ENCODE measurements at regions of chr2 and their contacts with region 1.

Region 1: GRCh38 chr2:181742922-181743722 is 62.8 kb upstream of the NEUROD1 start:
- DNase-seq: no peak
- ATAC-seq: no peak
- H3K4me3 ChIP-seq: no peak overlapping the region
- H3K27ac ChIP-seq: no peak overlapping the region
- H3K4me1 ChIP-seq: peaks cover 0 to 2% of the 10 kb centered on the region in 2 donors
- H3K27me3 ChIP-seq: no peaks in the 10 kb centered on the region
- CTCF ChIP-seq: peak; percentile 24 to 62 (median 52)
- POLR2A ChIP-seq: no peak

Region 2: DNA sequence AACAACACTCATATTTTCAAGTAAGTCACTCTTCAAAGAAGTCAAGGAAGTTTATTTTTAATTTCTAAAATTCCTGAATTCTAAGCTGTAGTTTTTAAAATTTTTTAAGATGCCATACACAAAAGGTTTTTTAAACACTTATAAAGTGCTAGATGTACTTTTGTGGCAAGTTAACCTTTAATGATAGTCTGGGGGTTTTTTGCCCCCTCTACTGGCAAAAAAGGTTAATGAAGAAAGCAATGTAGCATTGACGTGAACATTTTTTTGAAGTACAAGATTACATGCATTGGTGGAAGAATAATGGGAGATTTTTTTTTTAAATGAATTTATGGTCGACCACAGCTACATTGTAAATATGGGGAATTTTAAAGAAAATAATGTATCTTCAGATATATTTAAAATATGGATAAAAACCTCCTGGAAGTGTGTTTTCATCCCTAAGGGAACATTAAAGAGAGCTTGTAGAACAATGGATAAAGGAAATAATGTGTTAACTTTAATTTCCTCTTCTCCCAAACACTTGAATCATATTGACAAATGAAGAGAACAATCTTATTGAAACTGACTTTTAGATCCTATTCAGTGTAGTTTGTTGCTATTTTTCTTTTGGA is 161.0 kb after region 1 on chr2:
- in situ Hi-C with region 1: loop called in 2 of 4 experiments (anchors 10 to 25 kb)
- intact Hi-C with region 1: loop called (anchors 2 kb)
- DNase-seq: no peak
- ATAC-seq: no peak
- H3K4me3 ChIP-seq: no peak overlapping the region
- H3K27ac ChIP-seq: no peak overlapping the region
- H3K4me1 ChIP-seq: peaks cover 0 to 2% of the 10 kb centered on the region in 2 donors
- H3K27me3 ChIP-seq: no peaks in the 10 kb centered on the region
- CTCF ChIP-seq: peak in 3 of 5 experiments; percentile 46 to 55 (median 51)
- POLR2A ChIP-seq: no peak

Region 3: DNA sequence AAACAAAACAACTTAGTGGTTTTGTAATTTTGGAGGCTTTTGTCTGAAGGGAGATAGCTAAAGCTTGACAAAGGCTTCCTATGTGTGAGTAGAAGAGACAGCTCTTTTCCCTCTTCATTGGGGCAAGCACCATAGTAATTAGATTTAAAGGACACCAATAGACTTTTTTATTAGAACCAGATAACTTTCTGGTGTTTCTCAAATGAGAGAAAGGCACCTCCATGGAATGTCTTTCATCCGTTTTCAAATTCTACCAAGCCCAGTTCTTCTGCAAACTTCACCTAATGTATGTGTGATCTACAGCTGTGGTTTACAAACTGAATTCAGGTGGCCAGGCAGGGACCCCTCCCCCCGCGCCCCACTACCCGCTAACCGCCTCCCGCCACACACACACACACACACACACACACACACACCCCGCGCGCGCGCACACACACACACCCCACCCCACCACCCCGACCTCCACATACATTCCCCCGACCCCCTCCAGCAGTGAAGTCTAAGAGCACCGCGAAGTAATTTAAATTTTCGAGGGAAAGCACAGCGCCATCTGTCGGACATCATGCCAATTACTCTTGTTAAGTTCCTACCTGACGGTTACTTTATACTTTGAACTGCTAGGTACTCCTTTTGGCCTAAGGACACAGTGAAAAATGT is 210.9 kb after region 1 on chr2:
- in situ Hi-C with region 1: loop called in 2 of 4 experiments (anchors 10 to 25 kb)
- intact Hi-C with region 1: loop called (anchors 1 kb)
- DNase-seq: peak in 1 of 2 donors; percentile 28
- ATAC-seq: peak in 1 of 2 donors; percentile 81
- H3K4me3 ChIP-seq: peak overlapping the region; percentile 37 to 51 (median 47)
- H3K27ac ChIP-seq: no peak overlapping the region
- H3K4me1 ChIP-seq: peaks cover 0 to 5% of the 10 kb centered on the region in 2 donors
- H3K27me3 ChIP-seq: no peaks in the 10 kb centered on the region
- CTCF ChIP-seq: peak; percentile 20 to 74 (median 43)
- POLR2A ChIP-seq: no peak

Measured in gastrocnemius medialis (tissue), 4 donors.